ENCODE measurements at regions of chr7 and their contacts with region 1.

Region 1: DNA sequence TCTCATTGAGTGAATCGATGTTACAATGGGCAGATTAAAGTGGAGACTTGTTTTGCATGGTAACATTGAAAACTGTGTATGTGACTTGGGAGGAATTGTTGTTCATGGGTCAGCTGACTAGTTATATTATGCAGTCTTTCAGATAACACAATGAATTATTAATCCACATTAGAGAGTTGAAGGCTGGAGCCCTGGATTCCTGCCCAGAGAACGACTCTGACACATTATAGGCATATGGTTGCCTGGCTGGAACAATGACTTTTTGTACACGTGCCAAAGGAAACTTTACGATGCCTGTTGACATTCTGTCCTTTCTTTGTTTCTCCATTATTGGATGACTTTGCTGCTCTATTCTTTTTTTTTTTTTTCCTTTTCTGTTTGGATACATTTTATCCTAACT is 52.3 kb upstream of the TMEM229A start:
- DNase-seq: peak; percentile 88
- H3K4me3 Mint-ChIP-seq: peak overlapping the region; percentile 37
- H3K27ac Mint-ChIP-seq: peak overlapping the region; percentile 59
- H3K4me1 Mint-ChIP-seq: peaks cover 17% of the 10 kb centered on the region
- H3K27me3 Mint-ChIP-seq: no peaks in the 10 kb centered on the region
- CTCF ChIP-seq: no peak

Region 2: DNA sequence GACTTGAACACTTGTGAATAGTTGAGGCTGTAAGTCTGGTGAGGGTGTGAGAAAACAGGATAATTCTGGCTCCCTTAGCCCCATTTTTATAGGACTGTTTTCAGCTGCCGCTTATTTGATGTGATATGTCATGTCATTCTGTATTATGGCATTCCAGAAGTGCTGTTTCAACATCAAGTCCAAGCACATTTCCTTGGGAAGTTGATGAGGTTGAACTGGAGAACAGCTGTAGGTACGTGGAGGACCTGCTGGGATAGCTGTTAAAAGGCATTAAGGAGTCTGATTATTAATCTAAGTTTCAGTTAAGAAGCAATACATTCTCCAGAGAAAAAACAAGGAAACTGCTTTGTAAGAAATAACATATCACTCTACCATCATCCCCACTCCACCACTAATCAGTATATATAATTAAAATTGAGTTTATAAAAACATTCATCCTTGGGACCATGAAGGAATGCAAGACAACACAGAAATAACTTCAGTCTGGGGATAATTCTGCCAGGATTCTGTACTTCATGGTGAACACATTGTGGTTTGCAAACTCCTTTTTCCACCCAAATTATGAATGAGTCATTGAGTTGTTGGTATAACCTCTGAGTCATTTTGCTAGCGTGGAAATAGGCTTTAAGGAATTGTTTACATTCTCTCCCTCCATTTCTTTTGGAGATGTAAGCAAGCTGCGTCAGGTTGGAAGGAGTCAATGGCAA is 12.4 kb before region 1 on chr7:
- CTCF ChIA-PET with region 1: interaction called, 3 read pairs
- POLR2A ChIA-PET with region 1: interaction called, 13 read pairs
- intact Hi-C with region 1: no loop called
- DNase-seq: peak; percentile 87
- H3K4me3 Mint-ChIP-seq: no peak overlapping the region
- H3K27ac Mint-ChIP-seq: no peak overlapping the region
- H3K4me1 Mint-ChIP-seq: peaks cover 18% of the 10 kb centered on the region
- H3K27me3 Mint-ChIP-seq: no peaks in the 10 kb centered on the region
- CTCF ChIP-seq: no peak

Measured in MCF 10A (cell line).